MCF 10A (cell line): ENCODE measurements at regions of chr5 and their contacts with region 1.

Region 1: GRCh38 chr5:174327317-174328236 is 282.1 kb downstream of the NSG2 start:
- DNase-seq: peak; percentile 88
- H3K4me3 Mint-ChIP-seq: no peak overlapping the region
- H3K27ac Mint-ChIP-seq: peak overlapping the region; percentile 96
- H3K4me1 Mint-ChIP-seq: peaks cover 25% of the 10 kb centered on the region
- H3K27me3 Mint-ChIP-seq: peaks cover 25% of the 10 kb centered on the region
- CTCF ChIP-seq: peak; percentile 98

Region 2: GRCh38 chr5:174281855-174282254 is 45.7 kb before region 1 on chr5:
- CTCF ChIA-PET with region 1: no interaction called
- POLR2A ChIA-PET with region 1: no interaction called
- intact Hi-C with region 1: no loop called
- DNase-seq: no peak
- H3K4me3 Mint-ChIP-seq: no peak overlapping the region
- H3K27ac Mint-ChIP-seq: no peak overlapping the region
- H3K4me1 Mint-ChIP-seq: no peaks in the 10 kb centered on the region
- H3K27me3 Mint-ChIP-seq: peaks cover 64% of the 10 kb centered on the region
- CTCF ChIP-seq: no peak

Region 3: DNA sequence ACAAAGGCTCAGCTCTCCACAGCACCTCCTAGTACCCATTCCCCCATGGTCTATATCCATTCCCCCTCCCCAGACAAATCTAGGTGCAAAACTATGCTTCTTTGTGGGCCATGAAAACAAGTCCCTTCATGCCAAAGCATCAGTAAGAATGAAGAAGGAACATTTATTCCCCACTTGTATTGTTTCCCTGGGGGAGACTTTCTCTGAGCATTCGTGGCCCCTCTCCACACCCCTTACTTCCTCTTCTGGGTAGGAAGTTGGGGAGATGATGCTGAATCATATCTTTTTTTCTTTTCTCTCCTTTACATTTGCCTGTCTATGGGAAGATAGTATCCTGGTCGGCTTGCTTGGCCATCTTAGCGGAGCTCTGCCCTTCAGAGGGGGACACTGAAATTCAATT is 35.2 kb before region 1 on chr5:
- CTCF ChIA-PET with region 1: no interaction called
- POLR2A ChIA-PET with region 1: no interaction called
- intact Hi-C with region 1: no loop called
- DNase-seq: no peak
- H3K4me3 Mint-ChIP-seq: no peak overlapping the region
- H3K27ac Mint-ChIP-seq: no peak overlapping the region
- H3K4me1 Mint-ChIP-seq: no peaks in the 10 kb centered on the region
- H3K27me3 Mint-ChIP-seq: peaks cover 21% of the 10 kb centered on the region
- CTCF ChIP-seq: no peak

Region 4: GRCh38 chr5:174338185-174339010 is 10.8 kb after region 1 on chr5:
- CTCF ChIA-PET with region 1: interaction called, 17 read pairs
- POLR2A ChIA-PET with region 1: interaction called, 8 read pairs
- intact Hi-C with region 1: no loop called
- DNase-seq: peak; percentile 30
- H3K4me3 Mint-ChIP-seq: peak overlapping the region; percentile 28
- H3K27ac Mint-ChIP-seq: no peak overlapping the region
- H3K4me1 Mint-ChIP-seq: peaks cover 12% of the 10 kb centered on the region
- H3K27me3 Mint-ChIP-seq: no peaks in the 10 kb centered on the region
- CTCF ChIP-seq: no peak

Region 5: DNA sequence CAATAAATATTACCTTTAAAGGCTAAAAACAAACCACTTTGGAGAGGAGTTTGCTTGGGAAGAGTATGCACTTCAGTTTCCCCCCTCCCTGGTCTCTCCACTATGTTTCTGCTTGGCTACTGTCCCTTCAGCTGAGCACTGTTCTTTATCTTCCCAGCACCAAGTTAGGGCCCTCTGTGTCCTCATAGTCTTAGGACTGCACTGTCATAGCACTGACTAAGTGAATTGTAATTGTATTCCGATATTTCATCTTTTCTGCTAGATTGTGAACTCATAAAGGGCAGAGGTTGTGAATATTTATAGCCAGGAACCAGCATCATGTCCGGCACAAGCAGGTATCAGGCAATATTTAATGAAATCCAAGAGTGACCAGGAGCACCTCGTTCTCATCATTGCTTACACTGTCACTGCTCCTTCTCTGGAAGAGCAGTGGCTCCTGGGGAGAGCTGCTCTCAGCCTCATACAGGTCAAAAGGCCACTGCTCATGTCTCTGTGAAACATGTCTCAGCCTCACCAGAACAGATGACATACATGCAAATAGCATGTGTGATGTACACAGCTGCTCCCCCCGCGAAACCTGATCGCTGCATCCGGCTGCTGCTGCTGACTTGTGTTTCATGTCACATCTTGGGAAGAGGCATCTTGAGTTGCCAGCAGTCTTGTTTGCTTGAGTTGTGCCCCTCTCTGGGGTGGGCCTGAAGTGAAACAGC is 117.1 kb after region 1 on chr5:
- CTCF ChIA-PET with region 1: no interaction called
- POLR2A ChIA-PET with region 1: no interaction called
- intact Hi-C with region 1: no loop called
- DNase-seq: no peak
- H3K4me3 Mint-ChIP-seq: no peak overlapping the region
- H3K27ac Mint-ChIP-seq: no peak overlapping the region
- H3K4me1 Mint-ChIP-seq: no peaks in the 10 kb centered on the region
- H3K27me3 Mint-ChIP-seq: peaks cover 5% of the 10 kb centered on the region
- CTCF ChIP-seq: no peak

Region 6: DNA sequence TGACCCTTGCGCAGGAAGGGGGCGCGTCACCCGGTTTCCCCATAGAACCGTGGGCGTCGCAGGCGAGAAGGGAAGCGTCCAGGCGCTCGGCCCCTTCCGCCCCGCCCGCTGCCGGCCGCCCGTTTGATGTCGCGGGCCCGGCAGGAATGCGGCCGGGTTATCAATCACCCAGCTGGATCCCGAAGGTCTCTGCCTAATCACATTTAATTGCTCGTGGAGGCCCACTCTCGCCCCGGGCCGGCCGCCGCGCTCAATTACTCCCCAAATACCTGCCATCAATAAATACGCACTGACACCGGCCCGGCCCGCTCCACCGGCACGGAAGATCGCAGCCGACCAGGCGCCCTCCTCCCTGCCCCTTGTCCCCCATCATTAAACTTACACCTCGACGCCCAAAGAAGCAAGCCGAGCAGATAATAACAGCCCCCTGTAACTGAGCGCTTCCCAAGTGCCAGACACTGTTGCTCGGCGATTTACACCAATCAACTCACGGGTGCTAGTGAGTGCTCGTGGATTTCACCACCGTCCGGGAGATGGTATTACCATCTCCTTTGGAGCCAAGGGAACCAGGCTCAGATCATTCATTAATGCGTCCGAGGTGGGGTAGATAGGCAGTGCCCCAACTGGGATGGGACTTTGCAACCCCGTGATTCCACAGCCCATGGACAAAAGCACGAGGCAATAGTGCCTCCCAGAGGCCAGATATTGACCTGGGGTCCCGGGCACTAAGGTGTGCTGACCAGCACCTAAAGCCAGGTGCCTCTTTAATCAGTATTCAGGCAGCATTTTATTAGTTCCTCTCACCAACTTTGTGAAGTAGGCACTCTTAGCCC is 408.1 kb after region 1 on chr5:
- CTCF ChIA-PET with region 1: interaction called, 3 read pairs
- POLR2A ChIA-PET with region 1: no interaction called
- intact Hi-C with region 1: loop called (anchors 1 kb)
- DNase-seq: peak; percentile 63
- H3K4me3 Mint-ChIP-seq: peak overlapping the region; percentile 65
- H3K27ac Mint-ChIP-seq: no peak overlapping the region
- H3K4me1 Mint-ChIP-seq: peaks cover 20% of the 10 kb centered on the region
- H3K27me3 Mint-ChIP-seq: peaks cover 19% of the 10 kb centered on the region
- CTCF ChIP-seq: peak; percentile 74